ENCODE measurements at regions of chr11 and their contacts with region 1.

Region 1: DNA sequence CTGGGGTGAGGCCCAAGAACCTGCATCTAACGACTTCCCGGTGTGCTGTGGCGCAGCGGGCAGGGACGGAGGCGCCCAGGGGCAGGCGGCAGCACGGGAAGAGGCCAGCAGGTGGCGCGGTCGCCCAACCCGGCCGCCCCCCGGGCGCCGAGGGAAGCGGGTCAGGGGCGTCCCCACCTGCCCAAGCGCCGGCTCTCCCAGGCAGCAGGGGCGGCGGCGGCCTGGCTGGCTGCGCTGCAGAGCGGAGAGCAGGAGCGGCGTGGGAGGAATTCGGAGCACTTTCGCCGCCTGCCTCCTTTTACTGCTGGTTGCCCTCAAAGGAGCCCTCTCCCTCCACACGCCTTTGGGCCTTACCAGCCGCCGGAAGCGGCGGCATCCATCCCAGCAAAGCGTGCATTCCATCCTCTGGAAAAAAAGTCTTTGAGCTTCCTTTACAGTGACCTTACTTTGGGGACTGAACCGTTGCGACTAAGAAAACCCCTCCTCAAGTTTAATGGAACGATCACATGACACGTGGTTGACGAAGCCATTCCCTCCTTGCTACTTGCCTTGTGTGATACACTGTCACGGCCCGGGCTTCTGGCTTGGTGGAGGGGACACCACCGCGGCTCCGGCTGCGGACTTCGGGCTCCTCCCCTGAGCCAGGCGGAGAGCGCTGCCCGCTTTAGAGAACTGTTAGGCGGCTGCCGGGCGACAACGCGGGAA is 106.8 kb upstream of the CLMP start:
- DNase-seq: peak; percentile 86
- H3K4me3 Mint-ChIP-seq: peak overlapping the region; percentile 53
- H3K27ac Mint-ChIP-seq: peak overlapping the region; percentile 84
- H3K4me1 Mint-ChIP-seq: peaks cover 41% of the 10 kb centered on the region
- H3K27me3 Mint-ChIP-seq: no peaks in the 10 kb centered on the region

Region 2: DNA sequence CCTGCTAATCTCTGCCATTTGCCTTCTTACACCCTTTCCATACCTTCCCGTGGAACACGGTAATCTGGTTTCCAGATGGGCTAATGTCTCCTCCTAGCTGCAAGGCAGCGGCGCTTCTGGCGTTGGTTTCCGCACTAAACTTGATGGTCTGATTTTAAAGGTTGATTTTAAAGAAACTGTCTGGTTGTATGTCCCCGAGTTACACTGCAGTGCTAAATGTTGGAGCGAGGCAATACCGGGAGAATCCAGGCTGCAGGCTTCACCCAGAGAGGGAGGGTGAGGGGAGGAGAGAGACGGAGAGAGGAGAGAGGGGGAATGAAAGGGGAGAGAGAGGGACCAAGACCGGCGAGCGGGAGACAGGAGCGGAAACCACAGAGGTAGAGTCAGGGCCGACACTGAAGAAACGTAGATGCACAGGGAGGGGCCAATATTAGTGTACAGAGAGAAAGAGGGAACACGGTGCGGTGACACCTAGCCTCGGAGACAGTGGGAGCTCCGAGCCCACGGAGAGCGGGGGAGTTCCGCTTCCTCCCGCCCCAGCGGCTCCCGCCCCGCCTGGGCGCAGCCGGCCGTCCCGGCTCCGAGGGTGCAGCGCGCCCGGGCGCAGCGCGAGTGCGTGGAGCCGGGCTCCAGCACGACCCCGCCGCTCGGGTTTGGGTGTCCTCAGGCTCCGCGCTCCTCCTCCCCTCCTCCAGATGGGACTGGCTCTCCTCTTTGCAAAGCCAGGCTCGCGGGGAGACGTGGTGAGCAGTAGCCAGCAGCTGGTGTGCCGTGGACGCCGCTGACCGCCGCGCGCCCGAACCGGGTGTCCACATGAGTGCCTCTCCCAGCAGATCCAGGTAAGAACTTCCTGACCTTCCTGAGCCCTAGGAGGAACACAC is 56.4 kb after region 1 on chr11:
- CTCF ChIA-PET with region 1: interaction called, 47 read pairs
- POLR2A ChIA-PET with region 1: interaction called, 7 read pairs
- intact Hi-C with region 1: loop called (anchors 1 kb)
- DNase-seq: peak; percentile 71
- H3K4me3 Mint-ChIP-seq: peak overlapping the region; percentile 82
- H3K27ac Mint-ChIP-seq: peak overlapping the region; percentile 70
- H3K4me1 Mint-ChIP-seq: peaks cover 36% of the 10 kb centered on the region
- H3K27me3 Mint-ChIP-seq: peaks cover 27% of the 10 kb centered on the region

Region 3: GRCh38 chr11:123381817-123382554 is 80.1 kb after region 1 on chr11:
- CTCF ChIA-PET with region 1: interaction called, 4 read pairs
- POLR2A ChIA-PET with region 1: interaction called, 8 read pairs
- intact Hi-C with region 1: loop called (anchors 1 kb)
- DNase-seq: peak; percentile 83
- H3K4me3 Mint-ChIP-seq: no peak overlapping the region
- H3K27ac Mint-ChIP-seq: no peak overlapping the region
- H3K4me1 Mint-ChIP-seq: peaks cover 22% of the 10 kb centered on the region
- H3K27me3 Mint-ChIP-seq: no peaks in the 10 kb centered on the region

Region 4: DNA sequence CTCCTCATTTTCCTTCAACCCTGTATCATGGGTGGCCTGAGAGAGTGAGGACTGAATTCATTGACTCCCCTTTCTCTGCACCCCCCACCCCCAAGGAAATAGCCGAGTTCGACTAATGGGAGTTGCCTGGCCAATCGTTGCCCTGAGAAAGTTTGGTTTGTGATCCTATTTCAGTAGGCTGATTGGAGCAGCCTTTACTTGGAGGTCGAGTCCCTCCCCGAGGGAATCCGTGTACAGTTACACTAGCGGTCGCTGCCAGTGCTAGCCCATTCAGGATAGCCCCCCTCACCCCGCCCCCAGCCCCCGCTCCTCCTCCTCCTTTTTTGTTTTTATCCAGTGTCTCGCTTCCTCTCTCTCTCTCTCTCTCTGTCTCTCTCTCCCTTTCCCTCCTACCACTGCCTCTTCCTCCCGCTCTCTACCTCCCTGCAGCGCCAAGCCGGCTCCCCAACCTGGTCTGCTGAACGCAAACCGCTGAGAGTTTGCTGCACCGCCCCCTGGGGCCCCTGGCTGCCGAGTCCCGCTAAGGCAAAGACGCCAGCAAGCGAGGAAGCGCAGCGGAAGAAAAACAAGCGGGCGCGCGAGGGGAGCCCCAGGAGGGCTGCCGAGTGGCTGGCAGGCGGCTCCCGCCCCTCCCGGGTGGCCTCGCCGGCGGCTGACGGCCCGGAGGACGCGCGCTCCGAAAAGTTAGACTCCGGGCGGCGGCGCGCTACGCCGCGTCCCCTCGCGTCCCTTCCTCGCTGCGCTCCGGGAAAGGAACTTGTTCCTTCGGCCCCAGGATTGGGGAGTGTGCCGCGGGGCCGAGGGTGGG is 128.3 kb after region 1 on chr11 and contains the start of gene GRAMD1B:
- CTCF ChIA-PET with region 1: interaction called, 10 read pairs
- POLR2A ChIA-PET with region 1: interaction called, 3 read pairs
- intact Hi-C with region 1: loop called (anchors 1 kb)
- DNase-seq: peak; percentile 85
- H3K4me3 Mint-ChIP-seq: peak within 1 kb of the TSS; percentile 85
- H3K27ac Mint-ChIP-seq: peak within 1 kb of the TSS; percentile 90
- H3K4me1 Mint-ChIP-seq: peaks cover 40% of the 10 kb centered on the region
- H3K27me3 Mint-ChIP-seq: no peaks in the 10 kb centered on the region
- total RNA-seq, gene GRAMD1B: 36.8 to 39.0 TPM

Region 5: GRCh38 chr11:123478352-123478987 is 176.6 kb after region 1 on chr11:
- CTCF ChIA-PET with region 1: interaction called, 70 read pairs
- POLR2A ChIA-PET with region 1: no interaction called
- intact Hi-C with region 1: loop called (anchors 1 kb)
- DNase-seq: peak; percentile 38
- H3K4me3 Mint-ChIP-seq: peak overlapping the region; percentile 27
- H3K27ac Mint-ChIP-seq: peak overlapping the region; percentile 56
- H3K4me1 Mint-ChIP-seq: peaks cover 43% of the 10 kb centered on the region
- H3K27me3 Mint-ChIP-seq: no peaks in the 10 kb centered on the region

Measured in activated CD4-positive, alpha-beta memory T cell treated with anti-CD3 and anti-CD28 coated beads for 36 hours (primary cell).